HepG2 (cell line): ENCODE measurements at regions of chr17 and their contacts with region 1.

Region 1: GRCh38 chr17:38444151-38444550 is 15.9 kb downstream of the ARHGAP23 start:
- DNase-seq: peak; percentile 57
- ATAC-seq: peak; percentile 95
- H3K4me3 ChIP-seq: no peak overlapping the region
- H3K27ac ChIP-seq: no peak overlapping the region
- H3K4me1 ChIP-seq: peaks cover 4% of the 10 kb centered on the region
- H3K27me3 ChIP-seq: peaks cover 7 to 63% of the 10 kb centered on the region in 2 experiments; a peak in 4 of 5 replicates
- CTCF ChIP-seq: peak; percentile 98
- EP300 ChIP-seq: no peak
- POLR2A ChIP-seq: no peak
- RAD21 ChIP-seq: peak; percentile 96

Region 2: DNA sequence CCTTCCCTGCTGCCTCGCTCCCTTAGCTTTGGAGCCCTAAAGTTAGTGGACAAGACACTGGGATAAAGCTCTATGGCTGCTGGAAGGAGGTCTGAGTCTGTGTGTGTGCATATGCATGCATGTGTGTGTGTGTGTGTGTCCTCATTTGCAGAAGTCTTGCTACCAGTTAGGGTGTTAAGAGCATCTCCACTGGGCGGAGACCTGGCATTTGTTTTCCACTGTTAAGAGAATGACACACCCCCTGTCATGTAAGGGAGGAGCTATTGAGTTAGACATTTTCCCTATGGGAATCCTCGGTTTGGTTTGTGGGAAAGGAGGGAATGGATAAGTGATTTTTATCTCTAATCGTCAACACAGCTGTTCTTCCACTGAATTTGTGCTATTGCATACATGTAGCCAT is 40.7 kb before region 1 on chr17:
- CTCF ChIA-PET with region 1: no interaction called
- POLR2A ChIA-PET with region 1: no interaction called
- in situ Hi-C with region 1: no loop called
- intact Hi-C with region 1: no loop called
- DNase-seq: no peak
- ATAC-seq: no peak; the same call in 2 of the 3 replicates
- H3K4me3 ChIP-seq: no peak overlapping the region
- H3K27ac ChIP-seq: no peak overlapping the region
- H3K4me1 ChIP-seq: no peaks in the 10 kb centered on the region
- H3K27me3 ChIP-seq: no peaks in the 10 kb centered on the region
- CTCF ChIP-seq: no peak
- EP300 ChIP-seq: no peak
- POLR2A ChIP-seq: no peak
- RAD21 ChIP-seq: no peak

Region 3: GRCh38 chr17:38469875-38470274 is 25.7 kb after region 1 on chr17:
- CTCF ChIA-PET with region 1: interaction called, 21 read pairs
- POLR2A ChIA-PET with region 1: no interaction called
- in situ Hi-C with region 1: no loop called
- intact Hi-C with region 1: loop called (anchors 1 kb)
- DNase-seq: no peak
- ATAC-seq: no peak
- H3K4me3 ChIP-seq: no peak overlapping the region
- H3K27ac ChIP-seq: no peak overlapping the region
- H3K4me1 ChIP-seq: no peaks in the 10 kb centered on the region
- H3K27me3 ChIP-seq: peaks cover 27 to 66% of the 10 kb centered on the region in 2 experiments; a peak in 4 of 5 replicates
- CTCF ChIP-seq: no peak
- EP300 ChIP-seq: no peak
- POLR2A ChIP-seq: no peak
- RAD21 ChIP-seq: no peak

Region 4: GRCh38 chr17:38476544-38476943 is 32.4 kb after region 1 on chr17:
- CTCF ChIA-PET with region 1: interaction called, 21 read pairs
- POLR2A ChIA-PET with region 1: no interaction called
- in situ Hi-C with region 1: no loop called
- intact Hi-C with region 1: loop called (anchors 1 kb)
- DNase-seq: no peak
- ATAC-seq: no peak
- H3K4me3 ChIP-seq: no peak overlapping the region
- H3K27ac ChIP-seq: no peak overlapping the region
- H3K4me1 ChIP-seq: no peaks in the 10 kb centered on the region
- H3K27me3 ChIP-seq: peaks cover under 1 to 22% of the 10 kb centered on the region in 2 experiments; a peak in 4 of 5 replicates
- CTCF ChIP-seq: no peak
- EP300 ChIP-seq: no peak
- POLR2A ChIP-seq: no peak
- RAD21 ChIP-seq: no peak